ENCODE measurements at regions of chr18 and their contacts with region 1.

Region 1: GRCh38 chr18:59988098-59988706 is 88.4 kb downstream of the PMAIP1 start:
- DNase-seq: no peak
- ATAC-seq: no peak

Region 2: DNA sequence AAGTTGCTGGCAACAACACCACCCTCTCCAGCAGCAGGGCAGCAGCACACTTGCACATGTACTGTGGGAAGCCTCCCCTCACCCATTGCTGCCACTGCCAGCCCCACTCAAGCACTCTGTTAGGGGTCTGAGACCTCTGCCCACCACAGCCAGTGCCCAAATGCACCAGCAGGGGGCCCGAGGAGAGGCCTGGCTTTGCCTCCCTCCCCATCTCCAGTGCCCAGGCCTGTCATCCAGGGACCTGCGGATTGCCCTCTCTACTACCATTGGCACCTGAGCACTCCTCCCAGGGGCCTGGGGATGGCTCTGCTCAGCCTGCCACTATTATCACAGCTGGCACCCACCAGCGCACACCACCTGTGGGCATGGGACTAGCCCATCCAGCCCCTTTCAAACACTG is 87.3 kb after region 1 on chr18:
- intact Hi-C with region 1: no loop called
- DNase-seq: no peak
- ATAC-seq: no peak

Region 3: DNA sequence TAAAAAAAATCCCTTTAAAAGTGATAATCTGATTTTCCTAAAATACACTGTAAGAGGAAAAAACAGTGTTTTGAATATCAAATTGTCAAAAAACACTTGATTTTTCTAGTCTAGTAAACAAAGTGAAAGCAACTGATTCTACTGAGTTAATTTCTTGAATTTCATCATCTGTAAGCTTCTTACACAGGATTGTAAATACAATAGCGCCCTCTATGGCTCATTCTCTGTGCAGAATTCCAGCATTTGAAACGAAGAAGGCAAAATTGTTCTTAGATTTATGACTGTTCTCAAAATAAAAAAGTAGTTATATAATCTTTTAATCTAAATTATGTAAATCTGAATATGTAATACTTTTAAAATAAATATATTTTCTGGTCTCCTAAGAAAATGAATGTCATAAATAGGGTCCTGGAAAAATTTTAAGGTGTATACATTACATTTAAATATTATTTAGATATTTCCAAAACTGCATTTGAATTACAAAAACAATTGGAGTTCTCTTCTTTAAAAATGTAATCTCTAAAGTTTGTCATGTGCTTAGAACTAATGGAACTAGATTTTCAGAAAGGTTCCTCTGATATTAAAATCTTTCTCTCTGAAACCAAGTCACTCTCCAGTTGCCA is 561.2 kb after region 1 on chr18:
- intact Hi-C with region 1: loop called (anchors 10 kb)
- DNase-seq: no peak
- ATAC-seq: no peak